ENCODE measurements at regions of chr7 and their contacts with region 1.

Region 1: GRCh38 chr7:114944745-114945625 is 23.1 kb downstream of the MDFIC start:
- DNase-seq: no peak
- CTCF ChIP-seq: no peak

Region 2: GRCh38 chr7:114930829-114931655 is 13.9 kb before region 1 on chr7:
- CTCF ChIA-PET with region 1: interaction called, 61 read pairs
- POLR2A ChIA-PET with region 1: no interaction called
- DNase-seq: no peak
- CTCF ChIP-seq: no peak

Measured in GM10248 (cell line).